MCF 10A (cell line): ENCODE measurements at regions of chr3 and their contacts with region 1.

Region 1: DNA sequence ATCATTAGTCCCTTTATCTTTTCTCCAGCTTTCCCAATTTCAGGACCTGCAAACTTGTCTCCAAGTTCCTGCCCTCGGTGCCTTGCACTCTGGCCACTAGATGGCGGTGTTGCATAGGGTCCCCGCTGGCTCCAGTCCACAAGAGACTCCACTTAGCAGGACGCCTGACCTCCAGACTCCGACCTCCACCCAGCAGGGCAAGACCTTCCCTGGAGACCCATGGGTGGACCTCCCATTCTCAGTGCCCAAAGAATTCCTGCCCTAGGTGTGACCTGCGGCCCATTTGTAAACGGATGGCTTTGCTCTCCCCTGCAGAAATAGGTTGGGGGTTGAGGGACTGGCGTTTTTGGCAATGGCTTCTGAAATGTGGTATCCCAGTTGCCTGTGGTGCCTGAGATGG is 82.6 kb downstream of the LSM3 start:
- DNase-seq: peak; percentile 80
- H3K4me3 Mint-ChIP-seq: no peak overlapping the region
- H3K27ac Mint-ChIP-seq: no peak overlapping the region
- H3K4me1 Mint-ChIP-seq: no peaks in the 10 kb centered on the region
- H3K27me3 Mint-ChIP-seq: peaks cover 29% of the 10 kb centered on the region
- CTCF ChIP-seq: peak; percentile 97

Region 2: GRCh38 chr3:14234251-14235002 is 26.8 kb before region 1 on chr3:
- CTCF ChIA-PET with region 1: interaction called, 12 read pairs
- POLR2A ChIA-PET with region 1: no interaction called
- intact Hi-C with region 1: no loop called
- DNase-seq: peak; percentile 85
- H3K4me3 Mint-ChIP-seq: peak overlapping the region; percentile 10
- H3K27ac Mint-ChIP-seq: peak overlapping the region; percentile 68
- H3K4me1 Mint-ChIP-seq: peaks cover 15% of the 10 kb centered on the region
- H3K27me3 Mint-ChIP-seq: no peaks in the 10 kb centered on the region
- CTCF ChIP-seq: no peak

Region 3: GRCh38 chr3:14278799-14279625 is 17.8 kb after region 1 on chr3:
- CTCF ChIA-PET with region 1: interaction called, 13 read pairs
- POLR2A ChIA-PET with region 1: no interaction called
- intact Hi-C with region 1: no loop called
- DNase-seq: peak; percentile 29
- H3K4me3 Mint-ChIP-seq: no peak overlapping the region
- H3K27ac Mint-ChIP-seq: no peak overlapping the region
- H3K4me1 Mint-ChIP-seq: no peaks in the 10 kb centered on the region
- H3K27me3 Mint-ChIP-seq: no peaks in the 10 kb centered on the region
- CTCF ChIP-seq: no peak

Region 4: DNA sequence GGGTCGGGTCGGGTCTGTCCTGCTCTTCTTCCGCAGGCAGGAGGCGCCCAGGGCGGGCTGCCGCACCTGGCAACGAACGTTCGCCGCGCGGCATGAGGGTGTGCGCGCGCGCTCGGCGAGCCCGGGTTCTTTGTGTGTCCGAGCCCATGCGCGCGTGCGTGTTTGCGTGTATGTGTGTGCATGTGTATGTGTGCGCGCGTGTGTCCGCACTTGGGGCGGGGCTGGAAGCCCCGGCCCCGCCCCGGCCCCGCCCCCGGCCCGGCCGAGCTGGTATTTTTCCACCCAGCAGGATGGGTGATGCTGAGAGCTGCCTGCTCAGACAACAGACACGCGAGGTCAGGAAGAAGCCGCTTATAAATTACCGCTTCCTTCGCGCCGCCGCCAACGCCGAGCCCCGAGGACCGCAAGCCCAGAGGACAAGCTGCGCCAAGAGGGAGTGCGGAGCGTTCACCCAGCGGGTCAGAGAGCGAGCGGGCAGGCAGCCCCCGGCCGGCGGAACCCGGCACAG is 141.1 kb after region 1 on chr3 and contains the start of gene SLC6A6:
- CTCF ChIA-PET with region 1: no interaction called
- POLR2A ChIA-PET with region 1: interaction called, 3 read pairs
- intact Hi-C with region 1: loop called (anchors 2 kb)
- DNase-seq: peak; percentile 96
- H3K4me3 Mint-ChIP-seq: peak within 1 kb of the TSS; percentile 99
- H3K27ac Mint-ChIP-seq: peak within 1 kb of the TSS; percentile 86
- H3K4me1 Mint-ChIP-seq: peaks cover 6% of the 10 kb centered on the region
- H3K27me3 Mint-ChIP-seq: no peaks in the 10 kb centered on the region
- CTCF ChIP-seq: peak; percentile 53
- total RNA-seq, gene SLC6A6: 4.6 and 7.6 TPM in 2 replicates

Region 5: GRCh38 chr3:14461748-14462324 is 200.6 kb after region 1 on chr3:
- CTCF ChIA-PET with region 1: interaction called, 53 read pairs
- POLR2A ChIA-PET with region 1: no interaction called
- intact Hi-C with region 1: loop called (anchors 1 kb)
- DNase-seq: peak; percentile 61
- H3K4me3 Mint-ChIP-seq: no peak overlapping the region
- H3K27ac Mint-ChIP-seq: no peak overlapping the region
- H3K4me1 Mint-ChIP-seq: peaks cover 12% of the 10 kb centered on the region
- H3K27me3 Mint-ChIP-seq: no peaks in the 10 kb centered on the region
- CTCF ChIP-seq: peak; percentile 89

Region 6: GRCh38 chr3:14548321-14548729 is 287.1 kb after region 1 on chr3:
- CTCF ChIA-PET with region 1: no interaction called
- POLR2A ChIA-PET with region 1: no interaction called
- intact Hi-C with region 1: loop called (anchors 5 kb)
- DNase-seq: peak; percentile 66
- H3K4me3 Mint-ChIP-seq: no peak overlapping the region
- H3K27ac Mint-ChIP-seq: no peak overlapping the region
- H3K4me1 Mint-ChIP-seq: peaks cover 13% of the 10 kb centered on the region
- H3K27me3 Mint-ChIP-seq: peaks cover 17% of the 10 kb centered on the region
- CTCF ChIP-seq: peak; percentile 53